Mammary epithelial cell (primary cell): ENCODE measurements at regions of chr3 and their contacts with region 1.

Region 1: DNA sequence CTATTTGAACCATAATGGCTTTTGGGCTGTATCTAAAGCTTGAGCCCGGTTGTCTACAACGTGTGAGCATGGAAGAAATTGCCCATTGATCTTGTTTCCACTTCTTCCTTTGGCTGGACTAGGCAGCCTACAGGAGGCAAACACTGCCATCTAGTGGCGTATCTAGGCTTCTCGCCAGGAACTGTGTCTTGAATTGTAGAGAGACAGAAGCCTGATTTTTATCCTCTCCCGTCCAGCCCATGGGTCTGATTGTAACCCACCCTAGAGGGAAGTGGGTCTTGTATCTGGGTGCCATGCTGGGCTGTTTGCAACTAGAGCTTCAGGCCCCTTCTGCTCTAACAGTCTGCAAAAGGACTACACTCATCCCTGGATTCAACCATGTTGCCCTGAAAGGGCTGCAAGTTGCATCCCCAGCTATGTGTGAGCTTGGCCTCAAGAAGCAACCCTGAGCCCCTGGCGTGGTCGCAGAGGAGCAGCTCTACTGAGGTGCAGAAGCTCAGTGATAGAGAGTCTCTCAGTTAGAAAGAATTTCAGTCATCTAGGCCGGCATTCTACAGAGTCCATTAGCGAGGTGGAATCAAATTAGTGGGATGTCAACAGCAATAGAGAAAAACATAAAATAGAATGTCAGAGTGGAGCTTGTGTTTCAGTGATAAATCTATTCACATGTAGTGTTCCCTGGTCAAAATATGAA is 170.2 kb upstream of the UMPS start:
- DNase-seq: peak; percentile 64
- H3K4me3 ChIP-seq: no peak overlapping the region
- H3K27ac ChIP-seq: no peak overlapping the region
- H3K4me1 ChIP-seq: peaks cover 27% of the 10 kb centered on the region
- H3K27me3 ChIP-seq: no peaks in the 10 kb centered on the region
- CTCF ChIP-seq: peak; percentile 85 to 91

Region 2: DNA sequence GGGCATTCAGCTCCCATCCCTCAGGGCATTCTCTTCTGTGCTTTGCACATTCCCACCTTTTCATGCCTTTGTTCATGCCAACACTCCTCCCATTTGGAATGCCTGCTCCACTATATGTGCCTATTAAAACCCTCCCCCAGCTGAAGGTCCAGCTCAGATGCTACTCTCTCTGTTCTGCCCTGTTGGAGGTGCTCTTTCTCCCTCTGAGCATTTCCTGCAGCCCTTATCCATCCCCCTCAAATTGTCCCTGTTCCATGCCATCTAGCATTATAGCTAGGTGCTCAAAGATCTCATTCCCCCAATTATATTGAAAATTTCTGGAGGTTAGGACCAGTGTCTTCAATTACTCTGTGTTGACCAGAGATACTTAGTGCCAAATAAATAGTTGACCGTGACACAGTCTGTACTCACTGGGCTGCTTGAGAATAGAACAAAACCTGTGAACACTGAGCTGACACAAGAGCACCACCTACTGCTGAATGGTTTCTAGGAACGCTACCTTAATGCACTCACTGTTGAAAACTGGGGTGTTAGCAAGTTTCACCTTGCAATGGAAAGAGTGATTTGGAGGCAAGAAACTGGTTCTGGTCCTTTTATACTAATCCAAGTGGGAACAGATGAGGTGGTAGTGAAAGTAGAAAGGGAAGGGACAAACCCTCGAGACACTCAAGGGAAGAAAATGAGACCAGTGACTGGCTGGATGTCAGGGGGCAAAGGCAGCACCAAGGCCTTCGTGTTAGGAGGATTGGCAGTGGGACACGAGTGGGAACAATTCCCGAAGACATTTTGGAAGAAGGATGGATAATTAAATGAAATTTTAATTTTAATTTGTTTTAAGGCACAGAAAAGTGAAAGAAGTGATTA is 278.3 kb before region 1 on chr3:
- CTCF ChIA-PET with region 1: no interaction called
- dilution Hi-C with region 1: no loop called
- in situ Hi-C with region 1: no loop called
- intact Hi-C with region 1: loop called (anchors 5 kb)
- DNase-seq: peak; percentile 41
- H3K4me3 ChIP-seq: no peak overlapping the region
- H3K27ac ChIP-seq: no peak overlapping the region
- H3K4me1 ChIP-seq: peaks cover 9% of the 10 kb centered on the region
- H3K27me3 ChIP-seq: no peaks in the 10 kb centered on the region
- CTCF ChIP-seq: peak; percentile 66 to 77

Region 3: GRCh38 chr3:124492811-124493210 is 67.2 kb before region 1 on chr3:
- CTCF ChIA-PET with region 1: no interaction called
- dilution Hi-C with region 1: no loop called
- in situ Hi-C with region 1: no loop called
- intact Hi-C with region 1: loop called (anchors 2 kb)
- DNase-seq: peak; percentile 68
- H3K4me3 ChIP-seq: no peak overlapping the region
- H3K27ac ChIP-seq: no peak overlapping the region
- H3K4me1 ChIP-seq: peaks cover 10% of the 10 kb centered on the region
- H3K27me3 ChIP-seq: no peaks in the 10 kb centered on the region
- CTCF ChIP-seq: peak; percentile 75 to 86

Region 4: DNA sequence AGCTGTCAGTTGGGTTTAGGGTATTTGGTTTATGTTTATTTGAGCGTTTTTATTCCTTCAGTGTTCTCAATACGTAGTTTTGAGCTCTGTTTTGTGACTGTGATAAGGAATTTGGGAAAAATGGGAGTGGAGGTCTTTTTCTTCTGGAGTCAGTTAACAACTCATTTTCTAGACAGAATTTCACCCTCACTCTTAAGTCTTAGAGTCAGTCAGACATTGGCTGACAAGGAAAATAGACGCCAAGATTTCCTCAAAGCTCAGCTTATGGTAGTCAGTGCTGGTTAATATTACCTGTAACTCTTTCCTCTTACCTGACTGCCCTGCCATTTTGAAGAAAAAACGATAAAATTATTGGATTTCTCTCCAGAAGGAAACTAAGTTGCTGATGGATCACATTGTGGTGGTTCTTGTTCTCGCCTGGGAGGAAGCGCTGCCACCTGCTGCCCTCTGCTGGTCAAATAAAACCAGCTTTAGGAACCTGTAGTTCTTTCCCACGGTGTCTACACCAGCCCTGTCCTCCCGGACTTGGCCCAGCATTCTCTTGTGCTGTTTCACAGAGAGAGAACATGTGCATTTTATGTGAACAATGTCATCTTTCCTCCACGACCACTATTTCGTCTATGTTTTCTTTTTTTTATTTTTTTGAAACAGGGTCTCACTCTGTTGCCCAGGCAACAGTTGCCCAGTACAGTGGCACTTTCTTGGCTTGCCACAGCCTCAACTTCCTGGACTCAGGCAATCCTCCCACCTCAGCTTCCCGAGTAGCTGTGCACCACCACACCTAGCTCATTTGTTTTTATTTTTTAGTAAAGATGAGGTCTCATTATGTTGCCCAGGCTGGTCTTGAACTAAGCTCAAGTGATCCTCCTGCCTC is 128.8 kb after region 1 on chr3:
- CTCF ChIA-PET with region 1: interaction called, 3 read pairs
- dilution Hi-C with region 1: no loop called
- in situ Hi-C with region 1: loop called in 1 of 2 experiments (anchors 5 kb)
- intact Hi-C with region 1: loop called (anchors 1 kb)
- DNase-seq: peak; percentile 62
- H3K4me3 ChIP-seq: no peak overlapping the region
- H3K27ac ChIP-seq: no peak overlapping the region
- H3K4me1 ChIP-seq: peaks cover 17% of the 10 kb centered on the region
- H3K27me3 ChIP-seq: no peaks in the 10 kb centered on the region
- CTCF ChIP-seq: peak; percentile 82 to 85

Region 5: DNA sequence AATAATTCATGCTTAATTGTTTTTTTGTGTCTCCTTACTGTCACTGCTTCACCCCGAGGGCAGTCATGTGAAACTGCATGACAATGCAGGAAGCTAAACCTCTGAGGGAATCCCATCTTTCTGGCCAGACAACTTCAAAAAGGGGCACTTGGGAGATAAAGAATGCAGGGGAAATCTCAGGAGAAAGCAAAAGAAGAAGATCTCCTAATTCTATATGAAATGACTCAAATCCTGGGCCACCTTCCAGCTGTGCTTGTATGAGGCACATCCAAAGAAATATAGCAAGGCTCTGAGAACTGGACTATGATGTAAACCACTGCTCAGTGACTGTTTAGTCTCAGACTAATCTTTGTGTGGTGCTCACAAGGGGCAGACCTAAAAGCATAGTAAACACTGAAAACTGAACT is 147.6 kb after region 1 on chr3:
- CTCF ChIA-PET with region 1: no interaction called
- dilution Hi-C with region 1: no loop called
- in situ Hi-C with region 1: no loop called
- intact Hi-C with region 1: no loop called
- DNase-seq: peak; percentile 41
- H3K4me3 ChIP-seq: no peak overlapping the region
- H3K27ac ChIP-seq: no peak overlapping the region
- H3K4me1 ChIP-seq: no peaks in the 10 kb centered on the region
- H3K27me3 ChIP-seq: peaks cover 4% of the 10 kb centered on the region
- CTCF ChIP-seq: no peak

Region 6: GRCh38 chr3:124818398-124819091 is 258.5 kb after region 1 on chr3:
- CTCF ChIA-PET with region 1: no interaction called
- dilution Hi-C with region 1: no loop called
- in situ Hi-C with region 1: no loop called
- intact Hi-C with region 1: no loop called
- DNase-seq: peak; percentile 66
- H3K4me3 ChIP-seq: no peak overlapping the region
- H3K27ac ChIP-seq: no peak overlapping the region
- H3K4me1 ChIP-seq: peaks cover 6% of the 10 kb centered on the region
- H3K27me3 ChIP-seq: no peaks in the 10 kb centered on the region
- CTCF ChIP-seq: no peak

Region 7: GRCh38 chr3:124905849-124906248 is 345.8 kb after region 1 on chr3:
- CTCF ChIA-PET with region 1: no interaction called
- dilution Hi-C with region 1: no loop called
- in situ Hi-C with region 1: loop called (anchors 5 to 25 kb)
- intact Hi-C with region 1: loop called (anchors 1 kb)
- DNase-seq: no peak
- H3K4me3 ChIP-seq: no peak overlapping the region
- H3K27ac ChIP-seq: no peak overlapping the region
- H3K4me1 ChIP-seq: no peaks in the 10 kb centered on the region
- H3K27me3 ChIP-seq: no peaks in the 10 kb centered on the region
- CTCF ChIP-seq: peak in 1 of 2 donors; percentile 1

Region 8: GRCh38 chr3:124995460-124995994 is 435.5 kb after region 1 on chr3:
- CTCF ChIA-PET with region 1: no interaction called
- dilution Hi-C with region 1: no loop called
- in situ Hi-C with region 1: no loop called
- intact Hi-C with region 1: no loop called
- DNase-seq: peak; percentile 27
- H3K4me3 ChIP-seq: no peak overlapping the region
- H3K27ac ChIP-seq: no peak overlapping the region
- H3K4me1 ChIP-seq: no peaks in the 10 kb centered on the region
- H3K27me3 ChIP-seq: no peaks in the 10 kb centered on the region
- CTCF ChIP-seq: peak; percentile 65 to 67

Region 9: DNA sequence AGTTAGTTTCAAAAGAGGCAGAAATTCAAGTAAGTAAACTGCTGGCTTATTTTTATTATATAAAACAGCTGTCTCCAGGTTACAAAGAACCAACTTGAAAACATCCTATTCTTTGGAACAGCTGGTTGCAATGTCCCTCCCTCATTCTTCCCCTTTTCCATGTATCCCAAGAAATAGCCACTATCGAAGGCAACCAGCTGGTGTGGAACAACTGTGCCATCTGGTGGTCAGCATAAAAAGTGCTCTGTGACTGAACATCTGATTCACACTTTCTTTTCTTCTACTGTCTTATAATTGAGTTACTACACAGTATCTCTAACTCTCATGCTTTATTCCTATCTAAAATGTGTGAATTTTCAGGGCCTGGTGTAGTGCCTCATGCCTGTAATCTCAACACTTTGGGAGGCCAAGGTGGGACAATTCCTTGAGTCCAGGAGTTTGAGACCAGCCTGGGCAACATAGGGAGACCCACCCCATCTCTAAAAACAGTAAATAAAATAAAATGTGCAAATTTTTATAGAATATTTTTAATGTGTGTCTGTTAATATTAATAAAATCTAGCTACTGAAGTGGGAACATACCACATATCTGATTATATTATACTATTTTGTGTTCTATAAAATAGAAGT is 1025.7 kb after region 1 on chr3:
- CTCF ChIA-PET with region 1: no interaction called
- dilution Hi-C with region 1: no loop called
- in situ Hi-C with region 1: no loop called
- intact Hi-C with region 1: loop called (anchors 10 kb)
- DNase-seq: peak; percentile 37
- H3K4me3 ChIP-seq: no peak overlapping the region
- H3K27ac ChIP-seq: no peak overlapping the region
- H3K4me1 ChIP-seq: peaks cover 5% of the 10 kb centered on the region
- H3K27me3 ChIP-seq: no peaks in the 10 kb centered on the region
- CTCF ChIP-seq: peak; percentile 87 to 95